Tibial artery (tissue), 4 donors: ENCODE measurements at regions of chr10 and their contacts with region 1.

Region 1: GRCh38 chr10:73940634-73941221 is 29.8 kb downstream of the PLAU start:
- DNase-seq: peak; percentile 85 to 91
- H3K4me3 ChIP-seq: peak overlapping the region; percentile 13 to 20
- H3K27ac ChIP-seq: peak overlapping the region; percentile 70 to 77
- H3K4me1 ChIP-seq: peaks cover 0 to 36% (median 17%) of the 10 kb centered on the region in 4 donors
- H3K27me3 ChIP-seq: no peaks in the 10 kb centered on the region
- CTCF ChIP-seq: peak; percentile 96 to 97

Region 2: GRCh38 chr10:73886085-73886529 is 54.6 kb before region 1 on chr10:
- intact Hi-C with region 1: loop called (anchors 2 kb)
- DNase-seq: peak; percentile 72 to 85
- H3K4me3 ChIP-seq: no peak overlapping the region
- H3K27ac ChIP-seq: peak overlapping the region; percentile 70 to 79
- H3K4me1 ChIP-seq: peaks cover 9 to 47% (median 34%) of the 10 kb centered on the region in 4 donors
- H3K27me3 ChIP-seq: no peaks in the 10 kb centered on the region
- CTCF ChIP-seq: peak; percentile 79 to 94